Endothelial cell of umbilical vein (primary cell): ENCODE measurements at regions of chr11 and their contacts with region 1.

Region 1: DNA sequence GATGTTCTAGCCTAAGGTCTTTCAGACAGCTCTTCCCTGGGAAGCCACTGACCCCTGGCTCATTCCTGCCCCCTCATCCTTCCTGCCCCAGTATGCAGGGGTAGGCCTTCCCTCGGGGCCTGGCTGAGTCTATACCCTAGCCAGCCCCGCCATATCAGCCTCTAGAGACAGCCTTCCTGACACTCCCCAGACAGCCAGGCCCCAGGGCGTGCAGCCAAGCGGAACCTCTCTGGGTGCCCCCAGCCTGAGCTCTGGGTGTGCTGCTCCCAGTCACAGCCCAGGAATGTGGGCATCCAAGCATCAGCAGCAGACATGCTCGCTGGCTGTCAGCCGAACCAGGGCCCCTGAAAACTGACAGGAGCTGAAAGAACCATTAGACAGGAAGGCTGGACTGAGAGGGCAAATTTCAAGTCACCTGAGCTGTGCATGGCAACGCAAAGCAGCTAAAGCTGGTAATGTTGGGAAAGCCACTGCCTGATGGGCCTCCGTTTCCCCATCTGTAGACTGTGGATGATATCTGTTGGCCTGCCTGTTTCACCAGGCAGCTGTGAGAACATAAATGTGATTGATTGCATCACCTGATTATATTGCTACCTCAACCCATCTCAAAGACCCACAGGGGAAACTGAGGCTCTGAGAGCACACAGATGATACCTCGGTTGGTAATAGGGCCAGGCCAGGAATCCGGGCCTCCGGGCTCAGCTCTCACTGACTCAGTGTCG is 93.2 kb downstream of the LRRC32 start:
- DNase-seq: peak; percentile 71
- H3K4me3 ChIP-seq: no peak overlapping the region
- H3K27ac ChIP-seq: peak overlapping the region; percentile 85
- H3K4me1 ChIP-seq: peaks cover 39% of the 10 kb centered on the region
- H3K27me3 ChIP-seq: no peaks in the 10 kb centered on the region
- CTCF ChIP-seq: no peak
- POLR2A ChIP-seq: no peak

Region 2: DNA sequence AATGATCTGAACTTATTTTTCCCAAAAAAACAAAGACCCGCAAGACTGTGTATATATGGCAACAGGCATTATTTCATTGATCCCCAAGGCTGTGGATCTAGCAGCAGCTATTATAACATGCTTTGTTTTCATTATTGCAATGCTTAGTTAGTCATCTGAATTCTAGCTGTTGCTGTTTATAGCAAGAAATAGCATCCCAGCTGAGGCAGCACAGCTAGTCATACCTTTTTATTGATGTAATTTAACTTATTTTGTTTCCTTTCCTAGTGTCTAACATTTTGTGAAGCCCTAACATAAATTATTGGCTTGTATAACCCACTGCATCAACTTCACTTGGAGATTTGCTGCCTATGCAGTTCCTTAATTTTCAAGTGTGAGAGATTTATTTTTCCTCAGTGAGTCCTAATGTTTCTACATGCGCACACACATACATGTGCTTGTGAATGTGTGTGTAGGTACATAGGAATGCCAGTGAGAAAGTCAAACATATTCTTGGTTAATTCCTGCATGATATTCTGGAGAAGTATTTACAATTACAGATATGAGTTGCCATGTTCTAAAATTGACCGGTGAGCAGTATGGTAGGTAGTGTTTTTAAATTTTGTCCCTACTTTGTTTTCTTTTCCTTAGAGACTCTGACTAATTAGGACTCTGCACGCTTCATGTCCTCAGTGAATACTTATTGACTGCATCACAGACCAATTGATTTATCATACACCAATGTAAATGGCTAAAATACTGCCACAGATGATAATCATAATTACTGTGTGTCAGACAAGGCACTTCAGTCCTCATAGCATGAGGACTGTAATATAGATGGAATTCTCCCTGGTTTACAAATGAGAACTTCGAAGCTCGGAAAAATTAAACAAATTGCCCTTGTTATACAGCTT is 490.4 kb before region 1 on chr11:
- CTCF ChIA-PET with region 1: no interaction called
- POLR2A ChIA-PET with region 1: no interaction called
- dilution Hi-C with region 1: no loop called
- intact Hi-C with region 1: no loop called
- DNase-seq: no peak
- H3K4me3 ChIP-seq: no peak overlapping the region
- H3K27ac ChIP-seq: no peak overlapping the region
- H3K4me1 ChIP-seq: peaks cover 17% of the 10 kb centered on the region
- H3K27me3 ChIP-seq: no peaks in the 10 kb centered on the region
- CTCF ChIP-seq: no peak
- POLR2A ChIP-seq: no peak

Region 3: DNA sequence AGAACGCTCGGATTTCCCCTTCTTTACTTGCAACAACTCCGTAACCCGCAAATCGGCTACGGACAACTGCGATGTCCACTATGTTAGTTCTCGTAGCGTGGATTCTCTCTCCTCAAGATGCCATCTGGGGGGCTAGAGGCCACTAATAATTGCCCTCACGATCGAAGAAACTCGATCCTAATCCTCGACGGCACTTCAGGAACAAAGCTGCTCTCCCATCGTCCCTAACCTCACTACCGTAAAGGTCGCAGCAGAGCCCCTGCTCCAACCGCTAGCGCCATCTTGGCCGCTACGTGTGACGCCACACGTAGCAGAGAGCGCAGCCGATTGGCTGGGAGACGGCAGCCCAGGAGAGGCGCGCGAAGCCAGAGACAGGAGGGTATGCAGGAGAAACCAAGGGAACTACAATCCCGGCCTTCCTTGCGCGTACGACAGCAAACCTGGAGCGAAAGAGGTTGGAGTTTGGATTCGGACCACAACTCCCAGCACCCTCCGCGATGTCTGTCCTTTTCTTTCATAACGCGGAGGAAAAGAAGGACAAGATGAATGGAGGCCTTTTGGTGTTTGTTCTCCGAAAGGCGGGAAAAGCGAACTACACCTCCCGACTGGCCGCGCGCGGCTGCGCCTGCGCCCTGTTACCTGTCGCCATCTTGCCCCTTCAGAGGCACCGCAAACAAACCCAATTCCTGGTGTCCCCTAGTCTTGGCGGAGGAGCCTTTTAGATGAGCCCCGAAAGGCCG is 132.8 kb before region 1 on chr11 and contains the start of gene EMSY:
- CTCF ChIA-PET with region 1: no interaction called
- POLR2A ChIA-PET with region 1: interaction called, 5 read pairs
- dilution Hi-C with region 1: no loop called
- intact Hi-C with region 1: loop called (anchors 1 kb)
- DNase-seq: peak; percentile 100
- H3K4me3 ChIP-seq: peak within 1 kb of the TSS; percentile 83 to 96 (median 89)
- H3K27ac ChIP-seq: peak within 1 kb of the TSS; percentile 94
- H3K4me1 ChIP-seq: peaks cover 12% of the 10 kb centered on the region
- H3K27me3 ChIP-seq: no peaks in the 10 kb centered on the region
- CTCF ChIP-seq: no peak
- POLR2A ChIP-seq: peak; percentile 98
- total RNA-seq, gene EMSY: 23.4 and 25.7 TPM in 2 replicates

Region 4: DNA sequence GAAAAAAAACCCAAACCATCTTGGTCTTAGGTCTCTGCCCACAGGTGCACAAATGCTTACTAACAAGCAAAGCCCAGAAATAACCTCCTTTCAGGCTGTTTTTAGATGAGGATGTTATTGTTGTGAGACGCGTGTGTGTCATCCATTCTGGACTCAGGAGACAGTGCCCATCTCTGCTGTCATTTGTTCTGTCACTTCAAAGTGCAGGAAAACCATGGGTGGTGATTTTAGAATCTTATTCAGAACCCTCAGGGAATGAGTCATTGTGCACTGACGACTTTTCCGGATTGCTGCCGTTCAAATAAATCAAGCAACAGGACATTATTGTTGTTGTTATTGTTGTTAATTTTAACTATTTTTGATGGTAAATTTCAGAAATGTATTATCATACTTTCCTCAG is 17.1 kb before region 1 on chr11:
- CTCF ChIA-PET with region 1: interaction called, 8 read pairs
- POLR2A ChIA-PET with region 1: no interaction called
- dilution Hi-C with region 1: no loop called
- intact Hi-C with region 1: loop called (anchors 1 kb)
- DNase-seq: peak; percentile 70
- H3K4me3 ChIP-seq: no peak overlapping the region
- H3K27ac ChIP-seq: peak overlapping the region; percentile 34
- H3K4me1 ChIP-seq: peaks cover 21% of the 10 kb centered on the region
- H3K27me3 ChIP-seq: no peaks in the 10 kb centered on the region
- CTCF ChIP-seq: no peak
- POLR2A ChIP-seq: no peak

Region 5: GRCh38 chr11:76598426-76598839 is 21.1 kb after region 1 on chr11:
- CTCF ChIA-PET with region 1: interaction called, 17 read pairs
- POLR2A ChIA-PET with region 1: no interaction called
- dilution Hi-C with region 1: no loop called
- intact Hi-C with region 1: loop called (anchors 1 kb)
- DNase-seq: peak; percentile 42
- H3K4me3 ChIP-seq: no peak overlapping the region
- H3K27ac ChIP-seq: no peak overlapping the region
- H3K4me1 ChIP-seq: peaks cover 9% of the 10 kb centered on the region
- H3K27me3 ChIP-seq: no peaks in the 10 kb centered on the region
- CTCF ChIP-seq: peak; percentile 22 to 49
- POLR2A ChIP-seq: no peak

Region 6: GRCh38 chr11:76629853-76630599 is 52.7 kb after region 1 on chr11:
- CTCF ChIA-PET with region 1: interaction called, 22 read pairs
- POLR2A ChIA-PET with region 1: interaction called, 4 read pairs
- dilution Hi-C with region 1: no loop called
- intact Hi-C with region 1: loop called (anchors 1 kb)
- DNase-seq: peak; percentile 96
- H3K4me3 ChIP-seq: no peak overlapping the region
- H3K27ac ChIP-seq: peak overlapping the region; percentile 93
- H3K4me1 ChIP-seq: peaks cover 36% of the 10 kb centered on the region
- H3K27me3 ChIP-seq: no peaks in the 10 kb centered on the region
- CTCF ChIP-seq: peak in 1 of 2 donors; percentile 27
- POLR2A ChIP-seq: peak; percentile 73

Region 7: DNA sequence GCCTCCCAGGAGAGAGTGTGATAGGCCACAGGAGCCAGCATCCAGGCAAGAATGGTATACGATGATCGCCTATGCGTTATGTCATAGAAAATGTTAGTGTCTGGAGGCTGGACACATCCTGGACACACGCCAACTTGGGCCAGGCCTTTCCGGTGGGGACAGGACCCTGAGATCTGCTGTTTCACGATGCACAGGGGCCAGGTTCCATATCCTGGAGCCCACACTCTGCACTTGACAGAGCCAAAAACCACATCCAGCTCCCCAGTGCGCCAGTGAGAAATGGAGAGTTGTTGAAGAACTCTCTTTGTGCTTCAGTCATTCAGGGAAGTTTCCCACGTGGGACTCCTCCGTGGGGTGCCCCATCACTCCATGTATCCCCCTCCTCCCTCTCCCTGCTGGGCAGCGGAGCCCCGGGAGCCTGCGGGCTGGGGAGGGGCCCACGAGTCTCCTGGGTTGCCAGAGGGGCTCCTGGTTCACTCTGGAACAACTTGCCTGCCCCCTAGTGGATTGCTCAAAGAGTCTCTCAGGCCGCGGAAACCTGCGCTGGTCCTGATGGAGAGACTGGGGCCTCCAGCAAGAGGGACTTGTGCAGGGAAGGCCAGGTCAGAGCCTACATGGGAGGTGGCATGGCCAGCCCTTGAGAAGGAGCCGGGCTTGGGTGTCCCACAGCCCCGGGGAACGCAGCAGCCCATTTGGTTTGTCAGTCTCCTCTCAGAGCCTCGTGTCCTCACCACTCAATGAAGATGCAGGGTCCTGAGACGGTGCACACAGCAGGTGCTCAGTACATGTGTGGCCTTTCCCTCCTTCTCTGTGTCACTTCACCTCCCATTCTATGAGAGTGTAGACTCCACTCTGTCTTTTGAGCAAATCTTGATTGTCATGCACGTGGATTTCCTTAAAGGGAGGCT is 103.4 kb after region 1 on chr11:
- CTCF ChIA-PET with region 1: interaction called, 134 read pairs
- POLR2A ChIA-PET with region 1: no interaction called
- dilution Hi-C with region 1: no loop called
- intact Hi-C with region 1: loop called (anchors 1 kb)
- DNase-seq: peak; percentile 74
- H3K4me3 ChIP-seq: no peak overlapping the region
- H3K27ac ChIP-seq: no peak overlapping the region
- H3K4me1 ChIP-seq: no peaks in the 10 kb centered on the region
- H3K27me3 ChIP-seq: no peaks in the 10 kb centered on the region
- CTCF ChIP-seq: peak; percentile 78 to 89
- POLR2A ChIP-seq: no peak

Region 8: GRCh38 chr11:76752321-76753185 is 175.2 kb after region 1 on chr11:
- CTCF ChIA-PET with region 1: no interaction called
- POLR2A ChIA-PET with region 1: no interaction called
- dilution Hi-C with region 1: no loop called
- intact Hi-C with region 1: no loop called
- DNase-seq: no peak
- H3K4me3 ChIP-seq: no peak overlapping the region
- H3K27ac ChIP-seq: no peak overlapping the region
- H3K4me1 ChIP-seq: peaks cover 2% of the 10 kb centered on the region
- H3K27me3 ChIP-seq: no peaks in the 10 kb centered on the region
- CTCF ChIP-seq: no peak
- POLR2A ChIP-seq: no peak

Region 9: GRCh38 chr11:76768088-76768908 is 190.9 kb after region 1 on chr11:
- CTCF ChIA-PET with region 1: no interaction called
- POLR2A ChIA-PET with region 1: no interaction called
- dilution Hi-C with region 1: no loop called
- intact Hi-C with region 1: no loop called
- DNase-seq: peak; percentile 71
- H3K4me3 ChIP-seq: no peak overlapping the region
- H3K27ac ChIP-seq: no peak overlapping the region
- H3K4me1 ChIP-seq: peaks cover 22% of the 10 kb centered on the region
- H3K27me3 ChIP-seq: no peaks in the 10 kb centered on the region
- CTCF ChIP-seq: no peak
- POLR2A ChIP-seq: no peak